Activated CD4-positive, alpha-beta T cell treated with anti-CD3 and anti-CD28 coated beads for 36 hours (primary cell): ENCODE measurements at regions of chr7 and their contacts with region 1.

Region 1: DNA sequence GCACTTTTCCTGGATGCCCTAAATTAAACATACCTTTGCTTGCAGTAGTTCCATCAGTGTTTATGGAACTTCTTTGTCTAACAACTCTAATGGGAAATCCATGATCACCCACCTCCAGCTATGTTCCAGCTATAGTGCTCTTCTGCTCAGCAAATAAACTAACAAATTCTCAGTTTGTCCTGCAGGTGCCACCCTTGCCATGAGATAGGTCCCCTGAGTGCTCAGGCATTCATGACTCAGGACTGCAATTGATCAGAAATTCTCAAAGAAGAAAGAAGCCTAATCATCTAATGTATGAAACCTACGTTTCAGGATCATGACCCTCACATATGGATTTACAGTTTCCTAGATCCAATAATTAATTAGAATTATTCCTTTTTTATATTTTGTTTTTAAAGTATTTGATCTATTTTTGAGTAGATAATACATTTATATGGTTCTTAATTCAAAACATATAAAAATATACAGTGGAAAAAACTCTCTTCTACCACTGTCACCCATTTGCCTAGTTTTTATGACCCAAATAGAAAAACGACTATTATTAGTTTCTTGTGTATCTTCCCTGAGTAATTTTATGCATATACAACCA is 48.7 kb upstream of the DYNC1I1 start:
- DNase-seq: peak; percentile 48
- ATAC-seq: no peak
- H3K4me3 Mint-ChIP-seq: no peak overlapping the region
- H3K27ac Mint-ChIP-seq: no peak overlapping the region
- H3K4me1 Mint-ChIP-seq: no peaks in the 10 kb centered on the region
- H3K27me3 Mint-ChIP-seq: no peaks in the 10 kb centered on the region

Region 2: GRCh38 chr7:95871078-95871782 is 147.5 kb after region 1 on chr7:
- CTCF ChIA-PET with region 1: interaction called, 7 read pairs
- POLR2A ChIA-PET with region 1: no interaction called
- intact Hi-C with region 1: loop called (anchors 1 to 2 kb)
- DNase-seq: peak; percentile 29
- ATAC-seq: no peak
- H3K4me3 Mint-ChIP-seq: no peak overlapping the region
- H3K27ac Mint-ChIP-seq: no peak overlapping the region
- H3K4me1 Mint-ChIP-seq: no peaks in the 10 kb centered on the region
- H3K27me3 Mint-ChIP-seq: peaks cover 10% of the 10 kb centered on the region